Activated CD4-positive, alpha-beta memory T cell treated with anti-CD3 and anti-CD28 coated beads for 36 hours (primary cell): ENCODE measurements at regions of chr11 and their contacts with region 1.

Region 1: GRCh38 chr11:61899146-61899841 is 7.9 kb upstream of the FADS3 start:
- DNase-seq: peak; percentile 94
- H3K4me3 Mint-ChIP-seq: no peak overlapping the region
- H3K27ac Mint-ChIP-seq: no peak overlapping the region
- H3K4me1 Mint-ChIP-seq: peaks cover 7% of the 10 kb centered on the region
- H3K27me3 Mint-ChIP-seq: no peaks in the 10 kb centered on the region

Region 2: GRCh38 chr11:61816736-61817455 is 82.4 kb before region 1 on chr11 and contains the start of gene FADS1:
- CTCF ChIA-PET with region 1: interaction called, 10 read pairs
- POLR2A ChIA-PET with region 1: no interaction called
- intact Hi-C with region 1: no loop called
- DNase-seq: peak; percentile 92
- H3K4me3 Mint-ChIP-seq: peak within 1 kb of the TSS; percentile 83
- H3K27ac Mint-ChIP-seq: peak within 1 kb of the TSS; percentile 65
- H3K4me1 Mint-ChIP-seq: peaks cover 10% of the 10 kb centered on the region
- H3K27me3 Mint-ChIP-seq: peaks cover 12% of the 10 kb centered on the region
- total RNA-seq, gene FADS1: 24.9 to 26.5 TPM

Region 3: GRCh38 chr11:61927501-61927900 is 28.2 kb after region 1 on chr11:
- CTCF ChIA-PET with region 1: interaction called, 11 read pairs
- POLR2A ChIA-PET with region 1: no interaction called
- intact Hi-C with region 1: no loop called
- DNase-seq: no peak
- H3K4me3 Mint-ChIP-seq: no peak overlapping the region
- H3K27ac Mint-ChIP-seq: no peak overlapping the region
- H3K4me1 Mint-ChIP-seq: no peaks in the 10 kb centered on the region
- H3K27me3 Mint-ChIP-seq: peaks cover 3% of the 10 kb centered on the region

Region 4: GRCh38 chr11:61947486-61948210 is 48.4 kb after region 1 on chr11:
- CTCF ChIA-PET with region 1: interaction called, 237 read pairs
- POLR2A ChIA-PET with region 1: no interaction called
- intact Hi-C with region 1: loop called (anchors 1 kb)
- DNase-seq: peak; percentile 80
- H3K4me3 Mint-ChIP-seq: no peak overlapping the region
- H3K27ac Mint-ChIP-seq: no peak overlapping the region
- H3K4me1 Mint-ChIP-seq: no peaks in the 10 kb centered on the region
- H3K27me3 Mint-ChIP-seq: peaks cover 2% of the 10 kb centered on the region

Region 5: DNA sequence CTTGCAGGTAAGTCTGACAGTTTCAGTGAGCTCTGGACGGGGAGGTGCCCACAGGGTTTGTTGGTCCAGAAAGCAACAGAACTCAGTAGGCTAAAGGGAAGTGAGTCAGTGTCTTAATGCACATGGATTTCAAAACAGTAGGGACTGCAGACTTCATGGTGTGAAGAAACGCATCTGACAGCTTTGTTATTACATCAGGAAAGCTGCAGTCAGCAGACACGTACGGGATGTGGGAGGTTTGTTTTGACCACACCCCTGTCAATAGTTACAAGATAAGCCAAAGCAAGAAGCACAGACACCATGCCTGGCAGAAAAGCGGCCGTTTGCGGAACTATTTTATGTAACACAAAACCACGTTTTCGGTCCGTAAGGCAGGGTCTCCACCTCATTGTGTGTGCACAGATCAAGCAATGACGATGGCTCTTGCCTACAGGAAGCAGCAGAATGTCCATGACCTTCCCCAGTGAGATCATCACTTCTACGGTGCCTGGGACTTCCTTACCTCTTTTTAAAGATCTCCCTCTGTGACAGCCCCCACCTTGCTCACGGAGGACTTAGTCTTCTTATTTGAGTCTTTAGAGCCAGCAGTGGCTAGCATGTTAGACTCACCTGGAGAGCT is 126.3 kb after region 1 on chr11:
- CTCF ChIA-PET with region 1: interaction called, 15 read pairs
- POLR2A ChIA-PET with region 1: no interaction called
- intact Hi-C with region 1: no loop called
- DNase-seq: peak; percentile 84
- H3K4me3 Mint-ChIP-seq: peak overlapping the region; percentile 51
- H3K27ac Mint-ChIP-seq: peak overlapping the region; percentile 87
- H3K4me1 Mint-ChIP-seq: peaks cover 20% of the 10 kb centered on the region
- H3K27me3 Mint-ChIP-seq: no peaks in the 10 kb centered on the region

Region 6: DNA sequence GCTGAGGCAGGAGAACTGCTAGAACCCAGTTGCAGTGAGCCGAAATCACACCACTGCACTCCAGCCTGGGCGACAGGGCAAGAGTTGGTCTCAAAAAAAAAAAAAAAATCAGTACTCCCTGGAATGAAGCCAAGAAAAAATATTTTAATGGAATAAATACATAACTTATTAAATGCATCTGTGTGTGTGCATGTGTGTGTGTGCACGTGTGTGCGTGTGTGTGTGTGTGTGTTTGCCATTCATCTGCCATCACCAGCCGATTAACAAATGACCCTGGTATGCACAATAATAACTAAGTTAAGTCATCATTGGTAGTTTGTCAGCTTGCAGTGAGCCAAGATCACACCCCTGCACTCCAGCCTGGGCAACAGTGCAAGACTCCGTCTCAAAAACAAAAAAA is 484.5 kb after region 1 on chr11:
- CTCF ChIA-PET with region 1: no interaction called
- POLR2A ChIA-PET with region 1: no interaction called
- intact Hi-C with region 1: no loop called
- DNase-seq: no peak
- H3K4me3 Mint-ChIP-seq: no peak overlapping the region
- H3K27ac Mint-ChIP-seq: no peak overlapping the region
- H3K4me1 Mint-ChIP-seq: peaks cover 11% of the 10 kb centered on the region
- H3K27me3 Mint-ChIP-seq: no peaks in the 10 kb centered on the region